Activated naive CD4-positive, alpha-beta T cell treated with anti-CD3 and anti-CD28 coated beads for 36 hours (primary cell): ENCODE measurements at regions of chr16 and their contacts with region 1.

Region 1: GRCh38 chr16:58345574-58346354 is 46.5 kb upstream of the GINS3 start:
- DNase-seq: no peak
- H3K4me3 Mint-ChIP-seq: no peak overlapping the region
- H3K27ac Mint-ChIP-seq: no peak overlapping the region
- H3K4me1 Mint-ChIP-seq: no peaks in the 10 kb centered on the region
- H3K27me3 Mint-ChIP-seq: peaks cover 17% of the 10 kb centered on the region

Region 2: GRCh38 chr16:58249780-58250478 is 95.8 kb before region 1 on chr16:
- CTCF ChIA-PET with region 1: no interaction called
- intact Hi-C with region 1: no loop called
- DNase-seq: peak; percentile 82
- H3K4me3 Mint-ChIP-seq: peak overlapping the region; percentile 85
- H3K27ac Mint-ChIP-seq: no peak overlapping the region
- H3K4me1 Mint-ChIP-seq: peaks cover 6% of the 10 kb centered on the region
- H3K27me3 Mint-ChIP-seq: peaks cover under 1% of the 10 kb centered on the region

Region 3: DNA sequence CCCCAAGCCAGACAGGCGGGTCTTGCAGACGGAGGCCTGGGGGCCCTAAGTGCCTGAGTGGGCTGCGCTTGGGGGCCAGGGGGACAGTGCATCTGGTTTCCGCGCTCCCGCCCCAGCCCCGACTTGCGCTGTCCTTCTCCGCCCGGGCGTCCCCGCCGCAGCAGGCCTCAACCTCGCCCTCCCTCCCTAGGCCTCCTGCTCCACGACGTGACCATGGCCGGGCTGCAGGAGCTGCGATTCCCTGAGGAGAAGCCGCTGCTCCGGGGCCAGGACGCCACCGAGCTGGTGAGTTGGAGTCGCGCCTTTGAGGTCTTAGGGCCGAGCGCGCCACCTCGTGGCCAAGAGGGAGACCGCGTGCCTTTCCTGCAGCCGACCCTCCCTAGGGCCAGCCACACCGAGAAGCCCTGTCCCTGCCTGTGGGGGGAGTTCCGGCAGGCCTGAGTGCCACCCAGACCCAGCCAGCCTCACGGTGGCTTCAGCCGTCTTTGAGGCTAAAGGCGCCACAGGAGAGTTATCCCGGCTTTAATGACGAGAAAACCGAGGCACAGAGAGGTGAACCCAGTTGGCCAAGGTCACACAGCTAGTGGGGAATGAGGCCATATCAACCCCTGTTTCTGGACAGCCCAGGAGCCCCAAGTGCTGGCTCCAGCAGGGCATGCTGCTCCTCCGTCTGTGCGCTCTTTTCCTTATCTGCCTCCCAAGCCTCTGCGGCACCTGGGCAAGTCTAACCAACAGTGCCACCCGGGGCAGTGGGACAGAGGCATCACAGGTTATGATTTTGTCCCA is 142.0 kb after region 1 on chr16:
- CTCF ChIA-PET with region 1: interaction called, 15 read pairs
- intact Hi-C with region 1: loop called (anchors 1 kb)
- DNase-seq: peak; percentile 82
- H3K4me3 Mint-ChIP-seq: no peak overlapping the region
- H3K27ac Mint-ChIP-seq: no peak overlapping the region
- H3K4me1 Mint-ChIP-seq: no peaks in the 10 kb centered on the region
- H3K27me3 Mint-ChIP-seq: peaks cover 5% of the 10 kb centered on the region

Region 4: GRCh38 chr16:58515125-58515870 is 169.5 kb after region 1 on chr16 and contains the start of gene SETD6:
- CTCF ChIA-PET with region 1: no interaction called
- intact Hi-C with region 1: no loop called
- DNase-seq: peak; percentile 78
- H3K4me3 Mint-ChIP-seq: peak within 1 kb of the TSS; percentile 88
- H3K27ac Mint-ChIP-seq: peak within 1 kb of the TSS; percentile 74
- H3K4me1 Mint-ChIP-seq: peaks cover 45% of the 10 kb centered on the region
- H3K27me3 Mint-ChIP-seq: no peaks in the 10 kb centered on the region
- total RNA-seq, gene SETD6: 8.1 to 8.5 TPM